Left cardiac atrium (tissue), 4 donors: ENCODE measurements at regions of chr1 and their contacts with region 1.

Region 1: GRCh38 chr1:178093205-178093957 is 523 bp upstream of the RASAL2 start:
- DNase-seq: peak; percentile 95
- ATAC-seq: peak; percentile 89 to 90

Region 2: DNA sequence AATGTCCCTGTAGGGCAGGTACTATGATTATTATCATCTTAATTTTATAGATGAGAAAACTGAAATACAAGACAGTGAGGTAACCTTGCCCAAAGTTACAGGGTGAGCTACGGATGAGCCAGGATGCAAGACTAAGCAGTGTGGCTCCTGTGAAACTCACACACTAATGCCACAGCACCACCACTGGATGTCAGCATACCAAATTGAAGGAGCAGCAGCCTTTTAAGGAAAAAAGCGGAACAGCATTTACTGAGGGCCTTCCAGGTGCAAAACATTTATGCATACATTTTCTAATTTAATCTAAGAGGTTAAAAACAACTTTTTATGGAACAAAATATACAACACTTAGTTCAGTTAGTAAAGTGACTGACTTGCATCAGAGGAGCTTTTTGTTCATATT is 165.2 kb before region 1 on chr1:
- intact Hi-C with region 1: no loop called
- DNase-seq: no peak
- ATAC-seq: no peak

Region 3: DNA sequence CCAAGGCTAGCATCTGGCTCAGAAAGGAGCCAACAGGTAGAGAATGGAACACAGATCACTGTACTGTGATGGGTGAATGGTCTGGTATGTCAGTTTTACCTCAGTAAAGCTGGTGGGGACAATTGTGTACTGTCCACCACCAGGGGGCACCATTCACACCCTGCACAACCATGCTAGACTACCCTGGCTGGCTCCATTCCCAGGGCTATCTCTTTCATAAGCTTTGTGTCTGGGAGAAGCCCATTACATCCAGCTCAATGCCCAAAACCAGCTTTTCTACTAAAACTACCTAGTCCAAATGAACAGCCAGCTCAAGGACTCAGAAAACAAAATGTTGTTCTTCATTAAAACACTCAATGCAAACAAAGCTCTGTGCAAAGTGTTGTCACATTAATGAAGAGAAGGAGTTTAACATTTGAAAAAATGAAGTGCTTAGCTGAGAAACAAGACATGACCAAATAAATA is 61.5 kb before region 1 on chr1:
- intact Hi-C with region 1: loop called (anchors 2 to 5 kb)
- DNase-seq: peak; percentile 94
- ATAC-seq: peak; percentile 92 to 94

Region 4: GRCh38 chr1:178037503-178038253 is 55.7 kb before region 1 on chr1:
- intact Hi-C with region 1: loop called (anchors 2 to 5 kb)
- DNase-seq: peak; percentile 92
- ATAC-seq: peak; percentile 99

Region 5: DNA sequence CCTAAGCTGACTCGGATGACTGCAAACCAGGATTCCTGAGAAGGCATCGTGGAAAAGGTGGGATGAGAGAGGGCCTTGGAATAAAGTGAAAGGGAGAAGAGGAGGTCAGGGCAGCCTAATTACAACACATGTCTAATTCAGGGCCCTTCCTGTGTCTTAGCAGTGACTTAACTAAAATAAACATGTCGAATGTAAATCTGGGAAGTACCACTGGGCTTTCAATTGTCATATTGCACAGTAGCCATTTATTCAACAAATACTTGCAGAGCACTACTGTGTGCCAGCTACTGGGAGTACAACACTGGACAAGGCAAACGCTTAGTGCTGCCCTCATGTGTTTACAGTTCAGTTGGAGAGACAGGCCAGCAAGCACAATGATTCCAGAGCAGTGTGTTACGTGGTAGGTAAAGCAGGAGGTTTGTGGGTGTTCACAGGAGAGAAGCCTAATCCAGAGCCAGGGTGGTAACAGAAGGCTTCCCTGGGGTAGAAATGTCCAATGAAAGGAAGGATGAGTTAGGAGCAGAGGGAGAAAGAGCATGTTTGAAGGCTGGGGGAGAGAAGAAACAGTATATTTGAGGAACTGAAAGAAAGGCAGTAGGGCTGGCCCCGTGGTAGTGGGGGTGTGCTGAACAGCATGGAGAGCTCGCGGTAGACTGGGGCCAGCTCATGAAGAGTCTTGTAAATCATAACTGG is 37.5 kb before region 1 on chr1:
- intact Hi-C with region 1: loop called in 1 of 2 experiments (anchors 5 kb)
- DNase-seq: no peak
- ATAC-seq: peak; percentile 16 to 63

Region 6: GRCh38 chr1:178189814-178190213 is 96.4 kb after region 1 on chr1:
- intact Hi-C with region 1: loop called in 1 of 2 experiments (anchors 5 kb)
- DNase-seq: peak; percentile 31
- ATAC-seq: peak in 1 of 2 donors; percentile 63

Region 7: DNA sequence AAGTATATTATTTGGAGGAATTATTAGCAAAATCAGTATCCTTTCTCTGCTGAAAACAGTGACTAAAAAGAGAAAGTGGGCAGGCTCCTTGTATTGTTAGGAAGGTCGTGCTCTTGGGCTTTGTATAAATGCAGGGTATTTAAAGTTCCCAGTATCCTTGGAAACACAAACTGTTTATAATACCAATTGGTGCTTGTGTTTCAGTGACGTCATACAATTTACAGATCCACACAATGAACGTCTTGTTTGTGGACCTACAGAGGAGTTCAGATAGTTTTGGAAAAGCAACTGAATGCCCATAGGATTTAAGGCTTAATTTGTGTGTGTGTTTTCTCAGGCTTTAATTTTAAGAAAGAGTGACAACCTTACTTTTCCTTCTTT is 168.7 kb after region 1 on chr1:
- intact Hi-C with region 1: loop called in 1 of 2 experiments (anchors 10 kb)
- DNase-seq: no peak
- ATAC-seq: no peak